Mammary epithelial cell (primary cell): ENCODE measurements at regions of chr2 and their contacts with region 1.

Region 1: GRCh38 chr2:176088048-176088936 is 4.2 kb upstream of the HOXD13 start:
- DNase-seq: peak; percentile 37
- H3K4me3 ChIP-seq: peak overlapping the region; percentile 13 to 28 (median 24)
- H3K27ac ChIP-seq: no peak overlapping the region
- H3K4me1 ChIP-seq: peaks cover 17% of the 10 kb centered on the region
- H3K27me3 ChIP-seq: peaks cover 85% of the 10 kb centered on the region
- CTCF ChIP-seq: peak; percentile 39 to 81

Region 2: GRCh38 chr2:175366815-175367214 is 721.5 kb before region 1 on chr2:
- CTCF ChIA-PET with region 1: no interaction called
- dilution Hi-C with region 1: no loop called
- in situ Hi-C with region 1: loop called (anchors 10 to 25 kb)
- intact Hi-C with region 1: loop called (anchors 1 kb)
- DNase-seq: peak; percentile 24
- H3K4me3 ChIP-seq: no peak overlapping the region
- H3K27ac ChIP-seq: no peak overlapping the region
- H3K4me1 ChIP-seq: no peaks in the 10 kb centered on the region
- H3K27me3 ChIP-seq: peaks cover 7% of the 10 kb centered on the region
- CTCF ChIP-seq: peak; percentile 81 to 83

Region 3: GRCh38 chr2:175414882-175415487 is 673.3 kb before region 1 on chr2:
- CTCF ChIA-PET with region 1: no interaction called
- dilution Hi-C with region 1: no loop called
- in situ Hi-C with region 1: no loop called
- intact Hi-C with region 1: loop called (anchors 1 kb)
- DNase-seq: peak; percentile 41
- H3K4me3 ChIP-seq: no peak overlapping the region
- H3K27ac ChIP-seq: no peak overlapping the region
- H3K4me1 ChIP-seq: no peaks in the 10 kb centered on the region
- H3K27me3 ChIP-seq: no peaks in the 10 kb centered on the region
- CTCF ChIP-seq: peak; percentile 48 to 57

Region 4: GRCh38 chr2:175585496-175585895 is 502.8 kb before region 1 on chr2:
- CTCF ChIA-PET with region 1: no interaction called
- dilution Hi-C with region 1: no loop called
- in situ Hi-C with region 1: no loop called
- intact Hi-C with region 1: no loop called
- DNase-seq: no peak
- H3K4me3 ChIP-seq: no peak overlapping the region
- H3K27ac ChIP-seq: no peak overlapping the region
- H3K4me1 ChIP-seq: no peaks in the 10 kb centered on the region
- H3K27me3 ChIP-seq: no peaks in the 10 kb centered on the region
- CTCF ChIP-seq: no peak

Region 5: GRCh38 chr2:175690113-175690837 is 398.0 kb before region 1 on chr2:
- CTCF ChIA-PET with region 1: interaction called, 7 read pairs
- dilution Hi-C with region 1: no loop called
- in situ Hi-C with region 1: loop called in 1 of 2 experiments (anchors 10 kb)
- intact Hi-C with region 1: loop called (anchors 1 kb)
- DNase-seq: peak; percentile 49
- H3K4me3 ChIP-seq: no peak overlapping the region
- H3K27ac ChIP-seq: no peak overlapping the region
- H3K4me1 ChIP-seq: no peaks in the 10 kb centered on the region
- H3K27me3 ChIP-seq: peaks cover 7% of the 10 kb centered on the region
- CTCF ChIP-seq: peak; percentile 69 to 78

Region 6: DNA sequence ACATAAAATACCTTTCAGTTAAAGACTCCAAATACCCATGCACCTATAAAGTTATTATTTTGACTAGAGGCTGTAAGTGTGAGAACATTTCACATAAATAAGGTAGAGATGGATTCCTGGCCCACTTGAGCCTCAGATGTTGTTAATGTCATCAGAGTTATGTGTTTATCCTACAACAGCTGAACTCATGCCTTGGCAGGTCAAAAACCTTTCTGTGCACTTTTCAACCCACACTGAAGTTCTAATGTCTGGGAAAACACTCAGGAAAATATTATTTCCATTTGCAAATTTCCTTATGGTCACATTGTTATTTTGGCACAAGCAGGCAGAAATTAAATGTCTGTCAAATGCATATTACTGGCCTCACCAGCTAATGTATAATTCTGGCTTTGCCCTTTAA is 295.4 kb before region 1 on chr2:
- CTCF ChIA-PET with region 1: no interaction called
- dilution Hi-C with region 1: no loop called
- in situ Hi-C with region 1: no loop called
- intact Hi-C with region 1: no loop called
- DNase-seq: no peak
- H3K4me3 ChIP-seq: no peak overlapping the region
- H3K27ac ChIP-seq: no peak overlapping the region
- H3K4me1 ChIP-seq: no peaks in the 10 kb centered on the region
- H3K27me3 ChIP-seq: no peaks in the 10 kb centered on the region
- CTCF ChIP-seq: no peak

Region 7: GRCh38 chr2:176001916-176002687 is 86.2 kb before region 1 on chr2 and contains the start of gene LNPK:
- CTCF ChIA-PET with region 1: no interaction called
- dilution Hi-C with region 1: no loop called
- in situ Hi-C with region 1: no loop called
- intact Hi-C with region 1: loop called (anchors 5 kb)
- DNase-seq: peak; percentile 89
- H3K4me3 ChIP-seq: peak within 1 kb of the TSS; percentile 85 to 90 (median 88)
- H3K27ac ChIP-seq: peak within 1 kb of the TSS; percentile 72
- H3K4me1 ChIP-seq: peaks cover 8% of the 10 kb centered on the region
- H3K27me3 ChIP-seq: no peaks in the 10 kb centered on the region
- CTCF ChIP-seq: no peak
- total RNA-seq, gene LNPK: 34.7 to 47.7 TPM

Region 8: DNA sequence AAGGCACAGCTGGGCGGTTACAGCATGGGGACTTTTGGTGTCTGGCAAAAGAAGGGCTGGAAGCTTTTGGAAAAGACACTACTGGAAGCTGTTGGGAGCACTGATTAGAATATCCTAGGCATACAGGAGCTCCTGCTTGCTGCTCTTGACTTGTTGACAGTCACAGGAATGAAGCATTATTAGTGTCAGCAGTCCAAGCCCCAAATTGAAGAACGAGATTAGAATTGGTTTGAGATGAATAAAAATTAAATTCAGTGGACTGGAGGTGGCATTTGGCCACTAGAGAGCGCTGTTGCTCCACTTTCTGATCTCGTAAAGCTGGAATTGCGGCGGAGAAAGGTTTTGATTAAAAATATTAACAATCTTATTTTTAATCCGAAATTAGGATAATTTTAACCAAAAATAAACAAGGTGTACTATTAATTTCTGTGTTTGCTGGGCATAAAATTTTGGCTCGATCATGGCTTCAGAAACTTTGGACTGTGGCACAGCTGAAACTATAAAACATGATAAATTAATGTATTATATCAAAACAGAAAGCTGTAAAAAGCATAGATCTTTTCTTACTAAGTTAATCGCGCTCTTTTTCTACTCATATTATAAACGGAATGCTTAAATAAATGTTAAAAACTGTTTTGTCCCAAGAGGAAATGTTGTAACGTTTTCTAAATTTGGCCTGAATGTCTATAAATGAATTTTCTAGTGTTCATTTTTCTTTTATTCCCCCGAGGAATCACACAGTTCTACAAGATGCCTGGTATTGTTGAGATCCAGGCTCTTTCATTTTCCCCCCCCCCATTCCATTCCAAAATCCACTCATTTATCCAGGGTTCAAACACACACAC is 38.9 kb after region 1 on chr2:
- CTCF ChIA-PET with region 1: no interaction called
- dilution Hi-C with region 1: no loop called
- in situ Hi-C with region 1: no loop called
- intact Hi-C with region 1: no loop called
- DNase-seq: no peak
- H3K4me3 ChIP-seq: no peak overlapping the region
- H3K27ac ChIP-seq: no peak overlapping the region
- H3K4me1 ChIP-seq: peaks cover 8% of the 10 kb centered on the region
- H3K27me3 ChIP-seq: peaks cover 88% of the 10 kb centered on the region
- CTCF ChIP-seq: peak; percentile 74

Region 9: DNA sequence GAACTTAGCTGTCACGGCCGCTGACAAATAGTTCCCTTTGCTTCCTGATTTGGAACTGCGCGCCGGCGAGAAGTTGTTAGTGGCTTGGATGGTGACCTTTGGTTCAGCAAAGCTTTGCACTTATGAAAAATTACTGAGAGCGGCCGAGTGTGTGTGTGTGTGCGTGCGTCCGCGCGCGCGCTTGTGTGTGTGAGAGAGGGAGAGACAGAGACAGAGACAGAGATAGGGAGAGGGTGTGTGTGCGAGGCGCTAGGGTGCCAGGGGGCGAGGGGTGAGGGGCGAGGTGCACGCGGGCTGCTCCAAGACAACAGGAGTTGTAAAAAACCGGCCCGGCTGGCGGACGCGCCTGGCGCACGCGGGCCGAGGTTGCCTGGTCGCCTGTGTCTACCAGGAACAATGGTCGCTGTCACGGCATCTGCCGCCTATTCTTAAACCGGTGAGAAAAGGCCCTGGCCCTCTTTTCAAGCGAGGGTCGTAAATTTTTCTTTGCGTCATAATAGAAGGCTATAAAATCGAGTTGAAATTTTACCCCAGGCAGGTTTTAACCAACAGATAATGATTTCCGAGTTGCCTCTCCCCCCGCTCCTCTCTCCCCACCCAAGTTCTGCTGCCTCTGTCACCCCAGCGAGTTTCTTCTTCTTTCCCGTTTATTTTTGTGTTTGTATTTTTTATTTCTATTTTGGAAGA is 69.3 kb after region 1 on chr2:
- CTCF ChIA-PET with region 1: no interaction called
- dilution Hi-C with region 1: no loop called
- in situ Hi-C with region 1: no loop called
- intact Hi-C with region 1: no loop called
- DNase-seq: no peak
- H3K4me3 ChIP-seq: no peak overlapping the region
- H3K27ac ChIP-seq: no peak overlapping the region
- H3K4me1 ChIP-seq: no peaks in the 10 kb centered on the region
- H3K27me3 ChIP-seq: peaks cover 67% of the 10 kb centered on the region
- CTCF ChIP-seq: no peak